ENCODE measurements at regions of chr1 and their contacts with region 1.

Region 1: GRCh38 chr1:198187973-198188588 is 31.3 kb downstream of the NEK7 start:
- DNase-seq: peak in 9 of 14 experiments; percentile 13 to 76 (median 22)
- ATAC-seq: peak; percentile 86
- H3K4me3 ChIP-seq: peak overlapping the region; percentile 8
- H3K4me3 Mint-ChIP-seq: peak overlapping the region; percentile 44
- H3K27ac ChIP-seq: peak overlapping the region; percentile 60 to 64
- H3K27ac Mint-ChIP-seq: peak overlapping the region; percentile 81
- H3K4me1 ChIP-seq: peaks cover 30% of the 10 kb centered on the region
- H3K4me1 Mint-ChIP-seq: peaks cover 88% of the 10 kb centered on the region
- H3K27me3 ChIP-seq: no peaks in the 10 kb centered on the region
- H3K27me3 Mint-ChIP-seq: no peaks in the 10 kb centered on the region
- CTCF ChIP-seq: no peak

Region 2: GRCh38 chr1:197027378-197027777 is 1160.7 kb before region 1 on chr1:
- CTCF ChIA-PET with region 1: no interaction called
- POLR2A ChIA-PET with region 1: no interaction called
- intact Hi-C with region 1: no loop called
- DNase-seq: no peak
- ATAC-seq: no peak
- H3K4me3 ChIP-seq: no peak overlapping the region
- H3K4me3 Mint-ChIP-seq: no peak overlapping the region
- H3K27ac ChIP-seq: no peak overlapping the region
- H3K27ac Mint-ChIP-seq: no peak overlapping the region
- H3K4me1 ChIP-seq: no peaks in the 10 kb centered on the region
- H3K4me1 Mint-ChIP-seq: no peaks in the 10 kb centered on the region
- H3K27me3 ChIP-seq: no peaks in the 10 kb centered on the region
- H3K27me3 Mint-ChIP-seq: no peaks in the 10 kb centered on the region
- CTCF ChIP-seq: no peak

Region 3: DNA sequence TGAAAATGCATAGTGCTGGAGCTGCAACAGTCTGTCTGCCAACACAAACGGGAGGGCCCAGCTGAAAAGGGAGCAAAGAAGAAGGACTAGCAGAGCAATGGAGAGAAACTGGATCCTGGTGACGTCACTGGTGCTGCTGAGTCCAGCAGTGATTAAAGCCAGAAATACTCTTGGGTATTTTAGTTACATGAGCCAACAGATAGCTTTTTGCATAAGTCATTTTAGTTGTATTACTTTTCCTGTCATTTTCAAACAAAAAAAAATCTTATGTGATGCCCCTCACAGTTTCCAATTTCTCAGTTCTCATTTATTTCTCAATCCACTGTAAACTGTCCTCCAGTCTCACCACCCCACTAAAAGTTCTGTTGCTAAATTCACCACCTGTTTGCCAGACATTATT is 69.9 kb before region 1 on chr1:
- CTCF ChIA-PET with region 1: no interaction called
- POLR2A ChIA-PET with region 1: no interaction called
- intact Hi-C with region 1: no loop called
- DNase-seq: no peak
- ATAC-seq: no peak
- H3K4me3 ChIP-seq: no peak overlapping the region
- H3K4me3 Mint-ChIP-seq: no peak overlapping the region
- H3K27ac ChIP-seq: no peak overlapping the region
- H3K27ac Mint-ChIP-seq: no peak overlapping the region
- H3K4me1 ChIP-seq: no peaks in the 10 kb centered on the region
- H3K4me1 Mint-ChIP-seq: no peaks in the 10 kb centered on the region
- H3K27me3 ChIP-seq: no peaks in the 10 kb centered on the region
- H3K27me3 Mint-ChIP-seq: no peaks in the 10 kb centered on the region
- CTCF ChIP-seq: no peak

Region 4: DNA sequence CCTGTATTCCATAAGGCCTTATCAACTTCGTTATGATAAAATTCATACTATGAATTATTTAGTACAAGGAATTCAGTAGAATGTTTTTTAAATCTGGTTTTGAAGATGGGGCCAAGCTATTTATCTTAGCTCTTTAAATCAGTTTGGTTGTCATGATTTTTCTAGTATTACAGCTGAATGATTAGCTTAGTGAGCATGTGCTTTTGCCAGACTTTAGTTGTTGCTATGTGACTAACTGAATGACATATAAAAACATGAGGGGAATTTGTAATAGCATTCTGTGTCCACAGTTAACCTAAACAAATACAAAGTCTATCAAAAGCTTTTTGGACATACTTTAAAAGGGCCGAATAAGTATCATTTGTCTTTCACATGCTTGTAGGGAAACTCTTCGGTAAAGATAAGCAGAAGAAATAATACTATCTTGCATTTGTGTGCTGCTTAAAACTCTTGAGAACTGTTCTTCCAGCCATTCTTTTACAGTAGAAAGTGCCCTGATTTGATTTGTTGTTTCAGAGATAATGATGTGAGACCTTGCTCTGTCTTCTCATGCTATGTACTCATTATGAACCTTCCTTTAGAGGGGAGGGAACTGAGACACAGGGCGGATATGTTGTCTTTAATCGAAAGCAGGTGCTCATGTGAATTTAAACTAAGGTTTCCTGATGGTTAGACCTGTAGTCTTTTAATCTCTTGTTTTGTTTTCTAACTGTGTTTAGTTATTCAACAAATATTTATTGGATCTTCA is 12.5 kb before region 1 on chr1:
- CTCF ChIA-PET with region 1: interaction called, 4 read pairs
- POLR2A ChIA-PET with region 1: interaction called, 26 read pairs
- intact Hi-C with region 1: loop called in 1 of 2 experiments (anchors 2 kb)
- DNase-seq: peak in 4 of 14 experiments; percentile 38 to 72 (median 70)
- ATAC-seq: peak; percentile 82
- H3K4me3 ChIP-seq: no peak overlapping the region
- H3K4me3 Mint-ChIP-seq: peak overlapping the region; percentile 75
- H3K27ac ChIP-seq: peak overlapping the region; percentile 46 to 54
- H3K27ac Mint-ChIP-seq: peak overlapping the region; percentile 91
- H3K4me1 ChIP-seq: peaks cover 37% of the 10 kb centered on the region
- H3K4me1 Mint-ChIP-seq: peaks cover 88% of the 10 kb centered on the region
- H3K27me3 ChIP-seq: no peaks in the 10 kb centered on the region
- H3K27me3 Mint-ChIP-seq: no peaks in the 10 kb centered on the region
- CTCF ChIP-seq: no peak

Region 5: GRCh38 chr1:198220428-198220827 is 32.3 kb after region 1 on chr1:
- CTCF ChIA-PET with region 1: no interaction called
- POLR2A ChIA-PET with region 1: no interaction called
- intact Hi-C with region 1: loop called in 1 of 2 experiments (anchors 5 kb)
- DNase-seq: no peak
- ATAC-seq: no peak
- H3K4me3 ChIP-seq: no peak overlapping the region
- H3K4me3 Mint-ChIP-seq: no peak overlapping the region
- H3K27ac ChIP-seq: no peak overlapping the region
- H3K27ac Mint-ChIP-seq: no peak overlapping the region
- H3K4me1 ChIP-seq: no peaks in the 10 kb centered on the region
- H3K4me1 Mint-ChIP-seq: peaks cover 65% of the 10 kb centered on the region
- H3K27me3 ChIP-seq: no peaks in the 10 kb centered on the region
- H3K27me3 Mint-ChIP-seq: no peaks in the 10 kb centered on the region
- CTCF ChIP-seq: no peak

Region 6: GRCh38 chr1:199265336-199265735 is 1077.3 kb after region 1 on chr1:
- CTCF ChIA-PET with region 1: no interaction called
- POLR2A ChIA-PET with region 1: no interaction called
- intact Hi-C with region 1: no loop called
- DNase-seq: no peak
- ATAC-seq: no peak
- H3K4me3 ChIP-seq: no peak overlapping the region
- H3K4me3 Mint-ChIP-seq: no peak overlapping the region
- H3K27ac ChIP-seq: no peak overlapping the region
- H3K27ac Mint-ChIP-seq: no peak overlapping the region
- H3K4me1 ChIP-seq: no peaks in the 10 kb centered on the region
- H3K4me1 Mint-ChIP-seq: no peaks in the 10 kb centered on the region
- H3K27me3 ChIP-seq: no peaks in the 10 kb centered on the region
- H3K27me3 Mint-ChIP-seq: no peaks in the 10 kb centered on the region
- CTCF ChIP-seq: no peak